ENCODE measurements at regions of chr5 and their contacts with region 1.

Region 1: DNA sequence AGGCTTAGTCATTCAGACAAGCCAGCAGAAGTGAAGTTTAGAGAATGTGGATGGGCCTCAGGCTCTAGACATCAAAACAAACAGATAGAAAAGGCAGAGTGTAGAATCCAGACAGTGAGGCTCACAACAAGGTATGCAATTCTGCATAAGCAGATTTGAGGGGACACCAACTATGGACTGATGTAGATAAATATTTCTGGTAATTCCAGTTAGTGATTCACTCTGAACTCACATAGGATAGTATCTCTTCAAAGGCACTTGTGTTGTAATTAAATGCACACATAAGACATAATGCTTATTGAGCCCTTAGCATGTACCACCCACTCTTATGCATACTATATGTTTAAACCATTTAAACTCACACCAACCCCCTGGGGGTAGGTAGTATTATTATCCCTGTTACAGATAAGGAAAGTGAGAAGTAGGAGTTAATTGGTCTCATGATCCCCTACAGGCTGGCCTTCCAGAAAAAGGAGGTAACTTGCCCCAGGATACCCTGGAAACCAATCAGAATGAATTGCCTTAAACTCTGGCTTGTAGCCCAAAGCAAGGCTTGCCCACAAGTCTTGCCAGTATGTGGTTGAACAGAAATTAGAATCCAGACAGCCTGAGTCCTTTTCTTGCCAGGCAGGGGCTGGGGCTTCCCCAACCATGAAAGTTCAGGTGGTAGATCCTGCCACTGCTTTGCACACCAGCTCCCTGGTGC is 39.5 kb upstream of the HSPB3 start:
- DNase-seq: no peak
- ATAC-seq: no peak
- H3K4me3 Mint-ChIP-seq: no peak overlapping the region
- H3K27ac Mint-ChIP-seq: no peak overlapping the region
- H3K4me1 Mint-ChIP-seq: no peaks in the 10 kb centered on the region
- H3K27me3 Mint-ChIP-seq: no peaks in the 10 kb centered on the region
- CTCF ChIP-seq: no peak

Region 2: DNA sequence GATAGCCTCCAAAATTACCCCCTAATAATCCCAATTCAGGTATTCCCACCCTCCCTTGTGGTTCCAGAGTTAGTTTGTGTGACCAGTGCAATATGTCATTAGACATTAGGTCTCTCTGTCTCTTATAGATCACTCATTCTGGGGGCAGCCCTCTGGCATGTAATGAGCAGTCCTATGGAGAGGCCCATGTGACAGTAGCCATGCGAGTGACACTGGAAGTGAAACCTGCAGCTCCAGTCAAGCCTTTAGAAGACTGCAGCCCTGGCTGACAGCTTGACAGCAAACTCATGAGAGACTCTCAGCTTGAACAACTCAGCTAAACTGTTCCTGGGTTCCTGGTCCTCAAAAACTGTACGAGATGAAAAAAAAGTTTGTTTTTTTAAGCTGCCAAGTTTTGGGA is 14.5 kb before region 1 on chr5:
- CTCF ChIA-PET with region 1: interaction called, 21 read pairs
- POLR2A ChIA-PET with region 1: no interaction called
- intact Hi-C with region 1: no loop called
- DNase-seq: no peak
- ATAC-seq: no peak
- H3K4me3 Mint-ChIP-seq: no peak overlapping the region
- H3K27ac Mint-ChIP-seq: no peak overlapping the region
- H3K4me1 Mint-ChIP-seq: no peaks in the 10 kb centered on the region
- H3K27me3 Mint-ChIP-seq: peaks cover 4% of the 10 kb centered on the region
- CTCF ChIP-seq: no peak

Region 3: GRCh38 chr5:54443270-54443669 is 27.2 kb after region 1 on chr5:
- CTCF ChIA-PET with region 1: interaction called, 11 read pairs
- POLR2A ChIA-PET with region 1: no interaction called
- intact Hi-C with region 1: no loop called
- DNase-seq: no peak
- ATAC-seq: no peak
- H3K4me3 Mint-ChIP-seq: no peak overlapping the region
- H3K27ac Mint-ChIP-seq: no peak overlapping the region
- H3K4me1 Mint-ChIP-seq: peaks cover 20% of the 10 kb centered on the region
- H3K27me3 Mint-ChIP-seq: no peaks in the 10 kb centered on the region
- CTCF ChIP-seq: peak; percentile 57

Measured in activated CD8-positive, alpha-beta T cell treated with anti-CD3 and anti-CD28 coated beads for 36 hours (primary cell).